ENCODE measurements at regions of chr11 and their contacts with region 1.

Region 1: GRCh38 chr11:65111744-65112414 is at the start of gene TM7SF2:
- DNase-seq: peak; percentile 93
- H3K4me3 ChIP-seq: peak within 1 kb of the TSS; percentile 45 to 51 (median 49)
- H3K27ac ChIP-seq: no peak within 1 kb of the TSS
- H3K4me1 ChIP-seq: peaks cover 38% of the 10 kb centered on the region
- H3K27me3 ChIP-seq: no peaks in the 10 kb centered on the region
- CTCF ChIP-seq: no peak
- total RNA-seq, gene TM7SF2: 8.7 to 10.1 TPM

Region 2: DNA sequence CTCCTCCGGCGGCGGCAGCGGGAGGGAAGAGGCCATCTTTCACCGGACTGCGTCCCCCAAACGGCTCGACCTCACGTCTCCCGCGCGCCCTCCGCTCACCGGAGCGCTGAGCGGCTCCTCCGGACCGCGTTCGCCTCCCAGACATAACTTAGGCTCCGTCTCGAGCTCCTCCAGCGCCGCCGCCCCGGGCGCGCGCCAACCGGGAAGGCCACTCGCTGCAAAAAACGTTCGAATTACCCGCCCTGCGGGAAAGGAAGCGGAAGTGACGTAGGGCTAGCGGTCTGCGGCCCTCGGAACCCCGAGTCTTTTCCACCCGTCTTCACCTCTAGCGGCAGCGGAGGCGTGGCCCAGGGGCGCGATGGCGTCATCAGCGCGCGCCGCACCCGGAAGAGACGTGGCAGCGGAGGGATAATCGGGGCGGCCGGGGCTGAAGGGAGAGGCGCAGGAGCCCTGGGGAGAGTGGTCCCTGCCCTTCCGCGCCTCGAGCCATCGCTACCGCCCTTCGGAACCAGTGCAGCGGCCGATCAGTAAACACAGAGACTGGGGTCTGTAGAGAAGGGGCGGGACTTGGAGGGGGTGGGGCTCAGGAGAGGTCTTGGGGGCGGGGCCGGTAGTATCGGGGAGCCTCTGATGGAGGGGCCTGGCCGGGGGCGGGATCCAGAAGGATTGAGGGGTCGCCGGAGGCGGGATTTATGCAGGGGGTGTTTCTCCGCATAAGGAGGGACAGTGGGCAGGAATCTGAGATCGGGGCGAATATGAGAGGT is 27.9 kb before region 1 on chr11 and contains the starts of genes CDCA5 and ZFPL1:
- CTCF ChIA-PET with region 1: interaction called, 3 read pairs
- dilution Hi-C with region 1: no loop called
- in situ Hi-C with region 1: no loop called
- intact Hi-C with region 1: loop called (anchors 1 kb)
- DNase-seq: peak; percentile 93
- H3K4me3 ChIP-seq: peak within 1 kb of the TSS; percentile 72 to 88 (median 80)
- H3K27ac ChIP-seq: peak within 1 kb of the TSS; percentile 70
- H3K4me1 ChIP-seq: peaks cover 33% of the 10 kb centered on the region
- H3K27me3 ChIP-seq: no peaks in the 10 kb centered on the region
- CTCF ChIP-seq: no peak
- total RNA-seq, gene CDCA5: 2.2 to 34.6 TPM
- total RNA-seq, gene ZFPL1: 38.0 to 40.0 TPM

Region 3: GRCh38 chr11:65095974-65096806 is 15.7 kb before region 1 on chr11 and contains the start of gene VPS51:
- CTCF ChIA-PET with region 1: no interaction called
- dilution Hi-C with region 1: no loop called
- in situ Hi-C with region 1: no loop called
- intact Hi-C with region 1: loop called (anchors 2 kb)
- DNase-seq: peak; percentile 83
- H3K4me3 ChIP-seq: peak within 1 kb of the TSS; percentile 57 to 70 (median 61)
- H3K27ac ChIP-seq: peak within 1 kb of the TSS; percentile 50
- H3K4me1 ChIP-seq: peaks cover 9% of the 10 kb centered on the region
- H3K27me3 ChIP-seq: no peaks in the 10 kb centered on the region
- CTCF ChIP-seq: no peak
- total RNA-seq, gene VPS51: 78.4 to 125 TPM

Region 4: GRCh38 chr11:65213322-65214211 is 101.7 kb after region 1 on chr11:
- CTCF ChIA-PET with region 1: interaction called, 19 read pairs
- dilution Hi-C with region 1: no loop called
- in situ Hi-C with region 1: no loop called
- intact Hi-C with region 1: no loop called
- DNase-seq: no peak
- H3K4me3 ChIP-seq: no peak overlapping the region
- H3K27ac ChIP-seq: no peak overlapping the region
- H3K4me1 ChIP-seq: no peaks in the 10 kb centered on the region
- H3K27me3 ChIP-seq: no peaks in the 10 kb centered on the region
- CTCF ChIP-seq: no peak

Region 5: GRCh38 chr11:65314501-65315203 is 202.8 kb after region 1 on chr11 and contains the start of gene CDC42EP2:
- CTCF ChIA-PET with region 1: interaction called, 4 read pairs
- dilution Hi-C with region 1: no loop called
- in situ Hi-C with region 1: no loop called
- intact Hi-C with region 1: loop called (anchors 2 kb)
- DNase-seq: peak; percentile 82
- H3K4me3 ChIP-seq: peak within 1 kb of the TSS; percentile 77 to 91 (median 88)
- H3K27ac ChIP-seq: peak within 1 kb of the TSS; percentile 46
- H3K4me1 ChIP-seq: peaks cover 13% of the 10 kb centered on the region
- H3K27me3 ChIP-seq: no peaks in the 10 kb centered on the region
- CTCF ChIP-seq: no peak
- total RNA-seq, gene CDC42EP2: 6.8 to 24.8 TPM

Region 6: DNA sequence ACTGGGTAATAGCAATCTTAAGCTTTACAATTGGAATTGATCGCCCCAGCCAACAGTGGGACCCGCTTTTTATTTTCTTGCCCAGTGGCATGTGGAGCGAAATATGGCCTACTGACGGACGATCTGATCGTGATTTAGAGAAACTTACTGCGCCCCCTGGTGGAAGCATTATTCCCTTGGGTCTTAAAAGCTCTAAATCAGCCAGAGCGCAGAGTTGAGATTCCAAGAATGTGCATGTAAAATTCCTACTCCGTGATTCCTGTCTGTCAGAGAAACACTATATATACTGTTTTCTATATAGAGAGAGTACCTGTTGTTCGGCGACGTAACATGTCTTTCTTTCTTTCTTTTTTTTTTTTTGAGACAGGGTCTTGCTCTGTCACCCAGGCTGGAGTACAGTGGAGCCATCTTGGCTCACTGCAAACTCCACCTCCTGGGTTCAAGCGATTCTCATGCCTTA is 218.1 kb after region 1 on chr11:
- CTCF ChIA-PET with region 1: no interaction called
- dilution Hi-C with region 1: no loop called
- in situ Hi-C with region 1: no loop called
- intact Hi-C with region 1: loop called (anchors 5 kb)
- DNase-seq: peak; percentile 64
- H3K4me3 ChIP-seq: no peak overlapping the region
- H3K27ac ChIP-seq: peak overlapping the region; percentile 24
- H3K4me1 ChIP-seq: peaks cover 11% of the 10 kb centered on the region
- H3K27me3 ChIP-seq: no peaks in the 10 kb centered on the region
- CTCF ChIP-seq: peak; percentile 70 to 79

Measured in mammary epithelial cell (primary cell).